ENCODE measurements at regions of chr2 and their contacts with region 1.

Region 1: DNA sequence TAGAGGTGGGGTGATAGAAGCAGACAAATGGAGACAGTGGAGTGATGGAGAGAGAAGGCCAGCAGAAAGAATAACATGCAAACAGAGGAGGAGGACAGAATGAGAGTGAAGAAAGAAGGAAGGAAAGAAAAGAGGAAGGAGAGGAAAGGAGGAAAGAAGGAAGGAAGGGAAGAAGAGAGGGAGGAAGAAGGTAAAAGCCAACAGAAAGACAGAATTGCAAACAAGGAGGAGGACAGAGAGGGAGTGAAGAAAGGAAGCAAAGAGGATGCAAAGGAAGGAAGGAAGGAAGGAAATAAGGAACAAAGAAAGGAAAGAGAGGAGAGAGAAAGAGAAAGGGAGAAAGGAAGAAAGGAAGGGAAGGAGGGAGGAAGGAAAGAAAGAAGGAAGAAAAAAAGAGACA is 444.0 kb downstream of the IRS1 start:
- DNase-seq: no peak
- H3K4me3 Mint-ChIP-seq: no peak overlapping the region
- H3K27ac Mint-ChIP-seq: no peak overlapping the region
- H3K4me1 Mint-ChIP-seq: no peaks in the 10 kb centered on the region
- H3K27me3 Mint-ChIP-seq: no peaks in the 10 kb centered on the region
- CTCF ChIP-seq: no peak

Region 2: GRCh38 chr2:226227359-226227758 is 128.2 kb before region 1 on chr2:
- CTCF ChIA-PET with region 1: no interaction called
- intact Hi-C with region 1: no loop called
- DNase-seq: no peak
- H3K4me3 Mint-ChIP-seq: no peak overlapping the region
- H3K27ac Mint-ChIP-seq: no peak overlapping the region
- H3K4me1 Mint-ChIP-seq: no peaks in the 10 kb centered on the region
- H3K27me3 Mint-ChIP-seq: no peaks in the 10 kb centered on the region
- CTCF ChIP-seq: no peak

Region 3: GRCh38 chr2:226398580-226398979 is 43.0 kb after region 1 on chr2:
- CTCF ChIA-PET with region 1: no interaction called
- intact Hi-C with region 1: loop called (anchors 1 kb)
- DNase-seq: no peak
- H3K4me3 Mint-ChIP-seq: no peak overlapping the region
- H3K27ac Mint-ChIP-seq: no peak overlapping the region
- H3K4me1 Mint-ChIP-seq: no peaks in the 10 kb centered on the region
- H3K27me3 Mint-ChIP-seq: no peaks in the 10 kb centered on the region
- CTCF ChIP-seq: no peak

Measured in Calu3 (cell line).